Activated CD8-positive, alpha-beta T cell treated with anti-CD3 and anti-CD28 coated beads, Interleukin-2, amount 10 ng/mL, durations not matched to agents 7 days and 5 days (primary cell): ENCODE measurements at regions of chr3 and their contacts with region 1.

Region 1: DNA sequence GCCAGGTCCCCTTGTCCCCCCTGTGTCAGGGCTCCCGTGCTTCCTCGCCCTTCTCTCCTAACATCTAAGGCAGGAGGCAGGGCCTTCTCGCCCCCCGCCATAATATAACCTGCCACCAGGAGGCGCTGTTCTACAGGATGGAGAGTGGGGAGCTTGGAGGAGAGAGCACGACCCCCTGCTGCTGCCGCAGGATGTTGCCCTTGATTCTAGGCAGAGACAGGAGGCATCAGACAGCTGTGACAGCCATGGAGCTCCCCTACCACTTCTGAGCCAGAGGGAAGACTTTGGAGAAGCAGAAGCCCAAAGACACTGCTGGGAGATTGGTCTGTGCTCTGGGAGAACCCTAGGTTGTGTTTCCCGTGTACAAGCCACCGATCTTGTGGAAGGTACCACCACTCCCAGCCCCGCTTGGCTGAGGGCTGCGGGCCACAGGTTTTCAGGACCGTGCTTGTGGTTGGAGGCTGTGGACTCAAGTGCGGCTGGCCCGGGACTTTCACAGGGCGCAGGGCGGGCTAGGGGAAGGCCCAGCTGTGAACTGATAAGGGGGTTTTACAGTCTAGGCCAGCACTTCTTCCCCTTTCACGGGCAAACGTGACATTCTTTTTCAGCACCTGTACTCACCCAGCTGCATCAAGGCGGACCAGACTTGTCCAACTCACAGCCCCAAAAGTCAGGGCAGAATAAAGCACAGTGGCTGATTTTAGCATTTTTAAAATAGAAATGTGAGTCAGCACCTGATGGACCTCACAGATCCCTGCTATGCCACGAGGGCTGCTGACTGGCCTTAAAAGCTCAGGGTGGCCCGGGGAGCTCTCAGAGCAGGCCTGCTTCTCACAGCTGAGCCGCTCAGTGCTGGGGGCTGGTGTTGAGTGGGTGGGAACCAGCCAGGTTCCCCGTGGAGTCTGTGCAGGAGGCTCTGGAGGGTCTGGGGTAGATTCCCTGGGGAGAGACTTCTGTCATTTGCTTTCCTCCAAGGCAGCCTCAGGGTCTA is 2.6 kb upstream of the TIGIT start:
- DNase-seq: peak; percentile 92
- ATAC-seq: peak; percentile 75
- H3K4me3 Mint-ChIP-seq: peak overlapping the region; percentile 70
- H3K27ac Mint-ChIP-seq: peak overlapping the region; percentile 86
- H3K4me1 Mint-ChIP-seq: peaks cover 38% of the 10 kb centered on the region
- H3K27me3 Mint-ChIP-seq: no peaks in the 10 kb centered on the region

Region 2: GRCh38 chr3:113867506-113867905 is 423.7 kb before region 1 on chr3:
- CTCF ChIA-PET with region 1: no interaction called
- POLR2A ChIA-PET with region 1: no interaction called
- DNase-seq: no peak
- ATAC-seq: no peak
- H3K4me3 Mint-ChIP-seq: no peak overlapping the region
- H3K27ac Mint-ChIP-seq: no peak overlapping the region
- H3K4me1 Mint-ChIP-seq: no peaks in the 10 kb centered on the region
- H3K27me3 Mint-ChIP-seq: peaks cover 10% of the 10 kb centered on the region

Region 3: GRCh38 chr3:114071786-114072185 is 219.4 kb before region 1 on chr3:
- CTCF ChIA-PET with region 1: no interaction called
- POLR2A ChIA-PET with region 1: no interaction called
- DNase-seq: no peak
- ATAC-seq: no peak
- H3K4me3 Mint-ChIP-seq: no peak overlapping the region
- H3K27ac Mint-ChIP-seq: no peak overlapping the region
- H3K4me1 Mint-ChIP-seq: no peaks in the 10 kb centered on the region
- H3K27me3 Mint-ChIP-seq: no peaks in the 10 kb centered on the region

Region 4: DNA sequence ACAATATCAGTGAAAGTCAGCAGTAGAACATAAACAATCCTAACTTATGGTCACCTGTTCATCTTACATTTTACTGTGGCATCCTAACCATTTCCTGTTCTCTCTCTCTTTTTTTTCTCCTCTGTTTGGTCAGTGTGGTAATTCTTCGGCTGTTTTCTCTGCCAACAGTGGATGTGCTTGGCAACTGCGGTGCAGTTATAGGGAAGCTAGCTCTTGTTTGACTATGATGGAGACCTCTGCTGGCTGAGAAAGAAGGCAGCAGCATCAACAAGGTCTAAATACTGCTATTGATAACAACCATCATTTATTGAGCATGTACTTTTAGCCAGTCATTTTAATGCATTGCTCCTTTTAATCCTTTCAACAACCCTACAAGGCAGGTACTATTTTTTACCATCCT is 111.6 kb before region 1 on chr3:
- CTCF ChIA-PET with region 1: no interaction called
- POLR2A ChIA-PET with region 1: no interaction called
- DNase-seq: peak; percentile 25
- ATAC-seq: peak; percentile 42
- H3K4me3 Mint-ChIP-seq: no peak overlapping the region
- H3K27ac Mint-ChIP-seq: no peak overlapping the region
- H3K4me1 Mint-ChIP-seq: peaks cover 5% of the 10 kb centered on the region
- H3K27me3 Mint-ChIP-seq: peaks cover 17% of the 10 kb centered on the region

Region 5: GRCh38 chr3:114223143-114223542 is 68.1 kb before region 1 on chr3:
- CTCF ChIA-PET with region 1: interaction called, 25 read pairs
- POLR2A ChIA-PET with region 1: interaction called, 39 read pairs
- DNase-seq: peak; percentile 50
- ATAC-seq: peak; percentile 57
- H3K4me3 Mint-ChIP-seq: peak overlapping the region; percentile 32
- H3K27ac Mint-ChIP-seq: peak overlapping the region; percentile 89
- H3K4me1 Mint-ChIP-seq: peaks cover 90% of the 10 kb centered on the region
- H3K27me3 Mint-ChIP-seq: no peaks in the 10 kb centered on the region

Region 6: GRCh38 chr3:114274929-114275328 is 16.3 kb before region 1 on chr3:
- CTCF ChIA-PET with region 1: interaction called, 10 read pairs
- POLR2A ChIA-PET with region 1: no interaction called
- DNase-seq: no peak
- ATAC-seq: no peak
- H3K4me3 Mint-ChIP-seq: no peak overlapping the region
- H3K27ac Mint-ChIP-seq: no peak overlapping the region
- H3K4me1 Mint-ChIP-seq: peaks cover 5% of the 10 kb centered on the region
- H3K27me3 Mint-ChIP-seq: no peaks in the 10 kb centered on the region

Region 7: GRCh38 chr3:114323546-114324254 is 32.5 kb after region 1 on chr3:
- CTCF ChIA-PET with region 1: interaction called, 21 read pairs
- POLR2A ChIA-PET with region 1: interaction called, 10 read pairs
- DNase-seq: no peak
- ATAC-seq: peak; percentile 51
- H3K4me3 Mint-ChIP-seq: no peak overlapping the region
- H3K27ac Mint-ChIP-seq: peak overlapping the region; percentile 25
- H3K4me1 Mint-ChIP-seq: peaks cover 47% of the 10 kb centered on the region
- H3K27me3 Mint-ChIP-seq: no peaks in the 10 kb centered on the region

Region 8: DNA sequence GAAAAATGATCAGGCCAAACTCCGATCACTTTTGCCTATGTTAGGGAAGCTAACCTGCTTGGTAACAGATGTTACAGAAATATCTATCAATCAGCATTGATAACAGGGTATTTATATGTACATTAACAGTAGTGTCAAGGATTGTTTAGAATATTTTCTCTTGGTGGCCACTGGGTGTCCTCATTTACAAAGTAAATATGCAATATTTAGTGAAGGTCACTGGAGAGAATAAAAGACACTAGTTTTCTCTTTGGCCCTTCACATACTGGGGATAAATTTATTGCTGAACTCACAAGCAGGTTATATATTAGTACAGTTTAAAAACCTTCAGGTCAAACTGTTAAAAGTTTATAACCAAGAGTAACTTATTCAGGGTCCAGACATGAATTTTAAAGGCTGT is 71.6 kb after region 1 on chr3:
- CTCF ChIA-PET with region 1: interaction called, 18 read pairs
- POLR2A ChIA-PET with region 1: no interaction called
- DNase-seq: no peak
- ATAC-seq: no peak
- H3K4me3 Mint-ChIP-seq: no peak overlapping the region
- H3K27ac Mint-ChIP-seq: no peak overlapping the region
- H3K4me1 Mint-ChIP-seq: no peaks in the 10 kb centered on the region
- H3K27me3 Mint-ChIP-seq: no peaks in the 10 kb centered on the region

Region 9: GRCh38 chr3:114418724-114419543 is 127.7 kb after region 1 on chr3:
- CTCF ChIA-PET with region 1: interaction called, 40 read pairs
- POLR2A ChIA-PET with region 1: interaction called, 4 read pairs
- DNase-seq: peak; percentile 28
- ATAC-seq: peak; percentile 86
- H3K4me3 Mint-ChIP-seq: no peak overlapping the region
- H3K27ac Mint-ChIP-seq: no peak overlapping the region
- H3K4me1 Mint-ChIP-seq: peaks cover 6% of the 10 kb centered on the region
- H3K27me3 Mint-ChIP-seq: no peaks in the 10 kb centered on the region